OCI-LY7 (cell line): ENCODE measurements at regions of chr17 and their contacts with region 1.

Region 1: GRCh38 chr17:67376737-67377487 is at the start of gene PITPNC1:
- DNase-seq: peak; percentile 92
- H3K4me3 ChIP-seq: peak within 1 kb of the TSS; percentile 90
- H3K27ac ChIP-seq: peak within 1 kb of the TSS; percentile 88
- H3K4me1 ChIP-seq: peaks cover 33% of the 10 kb centered on the region
- CTCF ChIP-seq: peak; percentile 35; the same call in 1 of the 2 replicates
- total RNA-seq, gene PITPNC1: 13.3 and 14.3 TPM in 2 replicates

Region 2: DNA sequence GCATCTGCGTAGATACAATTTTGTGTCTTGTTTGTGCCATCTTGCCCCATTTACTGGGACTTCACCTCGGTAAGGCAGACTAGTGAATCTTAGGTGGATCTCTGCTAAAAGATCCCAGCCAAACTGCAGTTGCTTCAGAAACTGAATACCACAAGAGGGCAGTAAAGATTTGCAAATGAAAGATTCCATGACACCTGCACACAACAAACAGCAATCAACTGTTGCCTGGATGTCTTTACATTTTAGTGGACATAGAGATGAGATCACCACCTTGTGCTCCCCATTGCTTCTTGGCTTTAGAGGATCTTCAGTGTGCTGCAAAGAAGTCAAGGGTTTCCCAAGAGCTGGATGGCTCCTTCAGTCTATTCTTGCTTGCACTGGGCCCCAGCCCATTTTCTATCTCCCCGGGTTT is 661.2 kb before region 1 on chr17:
- CTCF ChIA-PET with region 1: no interaction called
- POLR2A ChIA-PET with region 1: no interaction called
- intact Hi-C with region 1: loop called (anchors 10 kb)
- DNase-seq: peak; percentile 81
- H3K4me3 ChIP-seq: no peak overlapping the region
- H3K27ac ChIP-seq: no peak overlapping the region
- H3K4me1 ChIP-seq: peaks cover 45% of the 10 kb centered on the region
- CTCF ChIP-seq: peak; percentile 93

Region 3: DNA sequence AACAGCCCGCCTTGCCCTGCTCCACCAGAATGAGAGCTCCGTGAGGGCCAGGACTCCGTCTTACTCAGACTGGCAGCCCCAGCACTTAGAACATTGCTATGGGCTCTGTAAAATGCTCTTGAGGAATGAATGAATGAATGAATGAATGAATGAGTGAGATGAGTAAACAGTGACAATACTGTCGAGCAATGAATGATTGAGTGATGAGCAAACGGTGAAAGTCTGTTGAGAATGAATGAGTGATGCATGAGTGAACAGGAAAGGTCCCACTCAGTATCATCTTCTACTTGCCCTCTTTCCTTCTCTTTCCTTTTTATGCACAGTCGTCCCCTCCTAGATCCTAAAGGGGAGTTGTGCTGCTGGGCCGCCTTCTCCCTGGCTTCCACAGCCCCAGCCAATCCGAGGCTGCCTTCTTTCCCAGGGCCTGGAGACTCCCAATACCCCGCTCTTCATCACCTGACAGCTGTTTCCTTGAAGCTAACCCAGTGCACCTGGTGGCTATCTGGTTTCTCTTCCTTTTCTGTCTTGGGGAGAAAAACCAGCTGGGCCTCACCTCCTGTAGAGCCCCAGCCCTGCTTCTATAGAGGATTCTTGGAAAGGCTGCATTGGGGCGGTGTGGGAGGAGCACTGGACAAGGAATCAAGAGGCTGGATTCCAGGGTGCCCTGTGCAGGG is 365.3 kb before region 1 on chr17:
- CTCF ChIA-PET with region 1: no interaction called
- POLR2A ChIA-PET with region 1: no interaction called
- intact Hi-C with region 1: no loop called
- DNase-seq: peak; percentile 47
- H3K4me3 ChIP-seq: no peak overlapping the region
- H3K27ac ChIP-seq: no peak overlapping the region
- H3K4me1 ChIP-seq: peaks cover 10% of the 10 kb centered on the region
- CTCF ChIP-seq: no peak

Region 4: DNA sequence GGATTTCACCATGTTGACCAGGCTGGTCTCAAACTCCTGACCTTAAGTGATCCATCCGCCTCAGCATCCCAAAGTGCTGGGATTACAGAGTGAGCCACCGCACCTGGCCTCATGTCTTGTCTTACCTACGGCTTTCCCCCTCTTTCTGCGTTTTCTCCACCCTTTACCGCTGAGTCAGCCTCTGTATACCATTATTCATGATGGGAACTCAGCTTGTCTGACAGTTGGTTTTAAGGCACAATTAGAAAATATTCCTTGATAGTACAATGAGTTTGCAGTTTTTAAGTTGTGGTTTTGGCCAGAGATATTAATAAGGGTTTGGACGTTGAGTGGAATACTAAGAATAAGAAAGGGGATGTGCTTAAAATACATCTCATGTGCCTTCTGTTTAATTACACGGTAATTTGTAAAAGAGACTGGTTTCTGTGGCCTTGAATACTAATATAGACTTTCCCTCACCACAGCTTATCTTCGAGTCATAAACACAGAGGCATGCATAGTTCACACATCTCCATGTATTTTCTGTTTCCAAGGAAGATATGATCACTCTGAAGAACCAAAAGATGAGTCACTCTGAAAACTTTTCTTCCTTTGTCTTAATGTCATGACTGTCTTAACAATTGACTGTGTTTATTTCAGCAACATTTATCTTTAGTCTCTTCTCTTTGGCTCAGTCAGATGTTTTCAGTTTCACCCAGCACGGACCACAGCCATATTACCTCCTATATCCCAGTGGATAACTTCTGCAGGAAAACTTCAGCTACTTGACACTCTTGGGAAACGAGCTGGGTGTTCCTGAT is 54.5 kb after region 1 on chr17:
- CTCF ChIA-PET with region 1: no interaction called
- POLR2A ChIA-PET with region 1: no interaction called
- intact Hi-C with region 1: no loop called
- DNase-seq: no peak
- H3K4me3 ChIP-seq: no peak overlapping the region
- H3K27ac ChIP-seq: no peak overlapping the region
- H3K4me1 ChIP-seq: peaks cover 7% of the 10 kb centered on the region
- CTCF ChIP-seq: no peak

Region 5: GRCh38 chr17:67467544-67468455 is 90.9 kb after region 1 on chr17:
- CTCF ChIA-PET with region 1: interaction called, 3 read pairs
- POLR2A ChIA-PET with region 1: interaction called, 7 read pairs
- intact Hi-C with region 1: loop called (anchors 2 kb)
- DNase-seq: peak; percentile 83
- H3K4me3 ChIP-seq: peak overlapping the region; percentile 48
- H3K27ac ChIP-seq: peak overlapping the region; percentile 89
- H3K4me1 ChIP-seq: peaks cover 46% of the 10 kb centered on the region
- CTCF ChIP-seq: no peak

Region 6: DNA sequence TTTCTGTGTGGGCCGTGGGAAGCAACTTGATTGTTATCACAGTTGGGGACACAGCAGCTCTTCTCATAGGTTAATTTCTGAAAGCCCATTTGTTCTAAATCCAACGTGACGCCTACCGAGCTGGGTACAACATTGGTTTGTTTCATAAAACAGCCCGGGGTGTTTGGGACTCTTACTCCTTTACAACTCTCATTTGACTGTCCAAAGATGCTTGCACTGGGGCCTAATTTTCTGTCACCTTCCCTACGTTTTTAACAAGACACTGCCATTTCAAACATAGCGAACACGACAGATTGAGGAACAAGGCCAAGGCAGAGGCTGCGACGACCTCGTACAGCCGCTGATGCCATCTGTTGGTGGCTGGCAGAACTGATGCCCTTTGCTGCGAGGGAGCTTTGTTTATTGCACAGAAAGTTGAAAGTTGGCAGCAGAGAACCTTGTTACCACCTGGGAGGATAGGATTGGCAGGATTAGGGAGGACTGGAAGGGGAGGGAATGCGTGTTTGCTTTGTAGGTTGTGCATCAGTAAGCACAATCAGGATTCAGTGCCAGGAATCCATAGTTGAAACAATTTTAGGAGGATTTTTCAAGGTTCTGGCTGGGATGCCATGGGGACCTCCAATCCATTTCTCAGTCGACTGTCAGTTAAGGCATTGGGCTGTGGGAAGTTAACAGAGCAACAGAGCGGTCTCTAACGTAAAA is 98.5 kb after region 1 on chr17:
- CTCF ChIA-PET with region 1: interaction called, 17 read pairs
- POLR2A ChIA-PET with region 1: interaction called, 7 read pairs
- intact Hi-C with region 1: loop called (anchors 1 kb)
- DNase-seq: peak; percentile 85
- H3K4me3 ChIP-seq: no peak overlapping the region
- H3K27ac ChIP-seq: no peak overlapping the region
- H3K4me1 ChIP-seq: peaks cover 18% of the 10 kb centered on the region
- CTCF ChIP-seq: peak; percentile 98

Region 7: DNA sequence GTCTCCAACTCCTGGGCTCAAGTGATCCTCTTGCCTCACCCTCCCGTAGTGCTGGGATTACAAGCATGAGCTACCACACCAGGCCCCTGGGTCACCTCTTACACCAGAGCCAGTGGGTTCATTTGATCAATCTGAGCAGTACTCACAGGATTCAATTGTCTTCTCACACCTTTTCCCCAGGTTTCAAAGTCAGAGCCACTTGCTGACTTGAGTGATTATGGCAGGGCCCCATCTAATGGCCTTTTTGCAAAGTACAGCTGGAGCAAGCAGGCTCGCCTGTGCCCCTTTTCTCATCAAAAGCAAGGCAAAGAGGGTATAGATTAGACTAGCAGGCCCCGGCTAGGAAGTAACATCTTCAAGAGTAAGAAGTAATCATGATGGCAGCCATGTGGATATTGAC is 226.0 kb after region 1 on chr17:
- CTCF ChIA-PET with region 1: no interaction called
- POLR2A ChIA-PET with region 1: no interaction called
- intact Hi-C with region 1: loop called (anchors 1 kb)
- DNase-seq: peak; percentile 66
- H3K4me3 ChIP-seq: no peak overlapping the region
- H3K27ac ChIP-seq: no peak overlapping the region
- H3K4me1 ChIP-seq: no peaks in the 10 kb centered on the region
- CTCF ChIP-seq: peak; percentile 78

Region 8: GRCh38 chr17:67689534-67690177 is 312.7 kb after region 1 on chr17:
- CTCF ChIA-PET with region 1: no interaction called
- POLR2A ChIA-PET with region 1: interaction called, 5 read pairs
- intact Hi-C with region 1: loop called (anchors 1 kb)
- DNase-seq: peak; percentile 80
- H3K4me3 ChIP-seq: no peak overlapping the region
- H3K27ac ChIP-seq: no peak overlapping the region
- H3K4me1 ChIP-seq: no peaks in the 10 kb centered on the region
- CTCF ChIP-seq: peak; percentile 96

Region 9: GRCh38 chr17:67824735-67825626 is 448.1 kb after region 1 on chr17 and contains the start of gene BPTF:
- CTCF ChIA-PET with region 1: no interaction called
- POLR2A ChIA-PET with region 1: no interaction called
- intact Hi-C with region 1: loop called (anchors 5 kb)
- DNase-seq: peak; percentile 96
- H3K4me3 ChIP-seq: peak within 1 kb of the TSS; percentile 88
- H3K27ac ChIP-seq: peak within 1 kb of the TSS; percentile 89
- H3K4me1 ChIP-seq: peaks cover 68% of the 10 kb centered on the region
- CTCF ChIP-seq: peak; percentile 83
- total RNA-seq, gene BPTF: 86.1 and 104 TPM in 2 replicates